ENCODE measurements at regions of chr15 and their contacts with region 1.

Region 1: GRCh38 chr15:90062023-90062442 is 40.2 kb downstream of the IDH2 start:
- DNase-seq: peak; percentile 77 to 90 (median 85)
- H3K4me3 ChIP-seq: no peak overlapping the region
- H3K27ac ChIP-seq: peak overlapping the region; percentile 5 to 64
- H3K4me1 ChIP-seq: peaks cover 0 to 44% (median 12%) of the 10 kb centered on the region in 3 donors
- H3K27me3 ChIP-seq: no peaks in the 10 kb centered on the region
- CTCF ChIP-seq: no peak

Region 2: GRCh38 chr15:89904519-89904918 is 157.5 kb before region 1 on chr15:
- intact Hi-C with region 1: loop called (anchors 10 kb)
- DNase-seq: no peak
- H3K4me3 ChIP-seq: no peak overlapping the region
- H3K27ac ChIP-seq: no peak overlapping the region
- H3K4me1 ChIP-seq: no peaks in the 10 kb centered on the region
- H3K27me3 ChIP-seq: no peaks in the 10 kb centered on the region
- CTCF ChIP-seq: no peak

Region 3: DNA sequence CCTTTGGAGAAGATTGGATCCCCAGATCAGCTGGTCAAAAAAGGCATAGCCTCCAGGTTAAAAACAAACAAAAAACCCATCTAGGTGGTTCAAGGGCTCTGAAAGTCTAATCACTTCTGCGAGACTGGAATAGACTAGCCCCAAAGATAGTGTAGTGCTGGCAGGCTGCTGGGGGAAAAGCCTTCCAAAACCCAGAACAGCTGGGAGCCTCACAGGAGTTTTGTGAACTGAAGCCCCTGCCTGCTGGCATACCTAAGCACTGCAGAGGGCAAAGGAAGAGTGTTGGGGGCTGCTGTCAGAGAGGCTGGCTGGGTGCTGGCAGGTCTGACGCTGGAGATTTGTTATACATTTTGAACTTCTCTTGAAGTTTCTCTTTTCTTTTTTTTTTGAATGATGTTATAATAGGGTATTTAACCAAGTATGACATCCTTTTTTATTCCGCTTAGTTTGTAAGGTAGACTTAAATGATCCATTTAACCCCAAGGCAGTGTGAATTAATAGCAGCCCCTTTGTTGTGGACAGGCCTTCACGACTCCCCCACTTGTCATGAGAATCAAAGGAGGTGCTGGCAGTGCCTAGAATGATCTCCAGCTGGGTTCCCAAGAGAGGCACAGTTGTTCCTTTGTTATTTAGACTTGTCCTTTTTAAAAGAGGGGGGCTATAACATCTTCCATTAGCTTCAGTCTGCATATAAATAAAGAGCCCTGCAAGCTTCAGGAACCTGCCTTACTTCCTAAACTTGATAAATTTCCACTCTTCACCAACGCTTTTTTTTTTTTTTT is 521.6 kb after region 1 on chr15:
- intact Hi-C with region 1: no loop called
- DNase-seq: no peak
- H3K4me3 ChIP-seq: no peak overlapping the region
- H3K27ac ChIP-seq: no peak overlapping the region
- H3K4me1 ChIP-seq: no peaks in the 10 kb centered on the region
- H3K27me3 ChIP-seq: no peaks in the 10 kb centered on the region
- CTCF ChIP-seq: no peak